ENCODE measurements at regions of chr6 and their contacts with region 1.

Region 1: DNA sequence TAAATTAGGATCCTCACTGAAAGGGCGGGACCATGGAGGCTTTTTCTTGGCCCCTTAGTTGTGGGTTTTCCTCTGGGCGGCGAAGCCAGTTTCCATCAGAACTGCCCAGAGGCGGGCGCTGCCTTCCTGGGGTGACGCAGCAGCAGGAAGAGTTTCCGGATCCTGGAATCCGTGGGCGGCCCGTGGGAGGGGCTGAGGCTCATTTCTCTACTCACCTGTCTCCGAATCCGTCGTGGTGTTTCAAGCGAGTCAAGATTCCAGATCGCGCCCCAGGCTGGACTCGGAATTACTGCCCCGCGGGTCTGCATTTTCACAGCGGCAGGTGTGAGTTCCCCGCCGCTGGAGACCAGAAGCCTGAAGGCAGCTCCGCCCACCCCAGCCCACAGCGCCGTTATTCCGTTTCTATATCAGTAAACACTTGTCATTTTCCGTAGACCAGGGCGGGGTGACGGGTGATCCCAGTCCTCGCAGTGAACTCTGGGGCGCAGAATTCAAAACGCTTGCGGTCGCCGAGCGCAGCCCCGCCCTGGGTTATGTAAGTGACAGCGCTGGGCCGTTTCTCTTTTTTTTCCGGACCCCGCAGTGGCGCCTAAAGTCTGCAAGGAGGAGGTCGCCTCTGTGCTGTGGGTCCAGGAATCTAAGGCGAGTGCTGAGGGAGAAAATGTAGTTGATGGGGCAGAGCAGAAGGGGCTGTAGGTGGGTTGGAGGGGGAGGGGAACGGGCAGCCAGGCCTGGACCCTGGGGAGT is 27.2 kb upstream of the POU5F1 start:
- DNase-seq: peak in 1 of 2 experiments; percentile 73
- H3K4me3 ChIP-seq: peak overlapping the region; percentile 43 to 74 (median 70)
- H3K27ac ChIP-seq: no peak overlapping the region
- H3K4me1 ChIP-seq: peaks cover 0 to 6% (median 5%) of the 10 kb centered on the region in 4 experiments; a peak in 6 of 7 replicates
- H3K27me3 ChIP-seq: no peaks in the 10 kb centered on the region
- CTCF ChIP-seq: peak in 1 of 3 experiments; percentile 3; a peak in 1 of 4 replicates
- EP300 ChIP-seq: no peak
- POLR2A ChIP-seq: no peak
- RAD21 ChIP-seq: peak; percentile 1 to 11; a peak in 1 of 4 replicates

Region 2: DNA sequence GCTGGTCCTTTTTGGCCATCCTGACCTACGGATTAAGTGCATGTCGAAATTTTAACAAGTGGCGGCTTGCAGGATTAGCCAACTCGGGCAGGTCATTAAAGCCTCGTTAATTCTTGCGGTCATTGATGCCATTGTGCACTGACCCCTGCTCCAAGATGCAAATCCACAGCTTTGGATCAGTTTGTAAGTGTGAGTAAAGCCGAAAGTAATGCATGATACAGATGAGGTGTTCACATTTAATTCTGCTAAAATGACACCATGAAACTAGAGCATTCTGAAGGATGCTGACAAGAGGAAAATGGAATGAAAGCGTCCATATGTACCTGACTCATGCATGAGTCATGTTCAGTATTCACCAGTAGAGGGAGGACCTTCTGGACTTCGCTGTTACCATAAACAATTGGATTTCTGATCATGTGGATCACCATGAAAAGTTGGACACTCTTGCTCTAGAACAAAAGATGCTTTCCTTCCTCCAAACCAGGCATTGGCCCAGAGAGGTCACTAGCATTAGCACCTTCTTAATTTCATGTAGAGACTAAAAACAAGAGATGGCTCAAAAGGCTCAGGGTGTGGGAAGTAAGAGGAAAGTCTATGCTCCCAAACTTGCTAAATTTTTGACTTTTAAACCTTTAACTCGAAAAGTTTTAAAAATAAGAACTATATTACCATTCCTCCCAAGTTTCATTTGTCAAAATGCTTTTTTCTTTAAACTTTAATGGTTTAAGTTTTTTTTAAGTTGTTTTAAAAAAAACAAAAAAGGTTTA is 139.4 kb before region 1 on chr6:
- CTCF ChIA-PET with region 1: no interaction called
- POLR2A ChIA-PET with region 1: no interaction called
- DNase-seq: no peak
- H3K4me3 ChIP-seq: no peak overlapping the region
- H3K27ac ChIP-seq: no peak overlapping the region
- H3K4me1 ChIP-seq: no peaks in the 10 kb centered on the region; a peak in 1 of 7 replicates
- H3K27me3 ChIP-seq: no peaks in the 10 kb centered on the region
- CTCF ChIP-seq: peak in 2 of 3 experiments; percentile 14 to 57; a peak in 2 of 4 replicates
- EP300 ChIP-seq: no peak
- POLR2A ChIP-seq: no peak
- RAD21 ChIP-seq: peak in 1 of 2 experiments; percentile 11; a peak in 1 of 4 replicates

Region 3: GRCh38 chr6:31128093-31128676 is 69.5 kb before region 1 on chr6:
- CTCF ChIA-PET with region 1: interaction called, 94 read pairs
- POLR2A ChIA-PET with region 1: interaction called, 2,251 read pairs
- DNase-seq: peak in 1 of 2 experiments; percentile 95
- H3K4me3 ChIP-seq: no peak overlapping the region
- H3K27ac ChIP-seq: no peak overlapping the region
- H3K4me1 ChIP-seq: peaks cover 0 to 3% (median 3%) of the 10 kb centered on the region in 4 experiments; a peak in 3 of 7 replicates
- H3K27me3 ChIP-seq: no peaks in the 10 kb centered on the region; a peak in 1 of 7 replicates
- CTCF ChIP-seq: peak; percentile 60 to 86 (median 83)
- EP300 ChIP-seq: no peak
- POLR2A ChIP-seq: no peak
- RAD21 ChIP-seq: peak; percentile 53 to 70

Region 4: DNA sequence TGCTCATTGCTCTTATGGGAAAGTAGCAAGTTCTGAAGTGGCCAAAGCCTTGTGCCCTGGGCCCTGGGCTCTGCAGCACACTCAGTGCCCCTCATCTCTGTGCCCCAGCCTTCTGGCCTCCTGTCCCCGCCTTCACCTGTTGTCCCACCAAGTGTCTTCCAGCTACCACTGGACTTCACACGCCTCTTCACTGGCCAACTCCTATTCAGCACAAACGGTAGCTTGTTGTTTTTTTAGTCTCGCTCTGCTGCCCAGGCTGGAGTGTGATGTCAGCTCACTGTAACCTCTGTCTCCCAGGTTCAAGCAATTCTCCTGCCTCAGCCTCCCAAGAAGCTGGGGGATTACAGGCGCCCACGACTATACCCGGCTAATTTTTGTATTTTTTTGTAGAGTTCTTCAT is 45.0 kb before region 1 on chr6:
- CTCF ChIA-PET with region 1: interaction called, 45 read pairs
- POLR2A ChIA-PET with region 1: interaction called, 2,251 read pairs
- DNase-seq: no peak
- H3K4me3 ChIP-seq: no peak overlapping the region
- H3K27ac ChIP-seq: no peak overlapping the region
- H3K4me1 ChIP-seq: peaks cover 0 to 13% (median 5%) of the 10 kb centered on the region in 4 experiments; a peak in 3 of 7 replicates
- H3K27me3 ChIP-seq: no peaks in the 10 kb centered on the region
- CTCF ChIP-seq: no peak
- EP300 ChIP-seq: no peak
- POLR2A ChIP-seq: no peak
- RAD21 ChIP-seq: no peak

Region 5: DNA sequence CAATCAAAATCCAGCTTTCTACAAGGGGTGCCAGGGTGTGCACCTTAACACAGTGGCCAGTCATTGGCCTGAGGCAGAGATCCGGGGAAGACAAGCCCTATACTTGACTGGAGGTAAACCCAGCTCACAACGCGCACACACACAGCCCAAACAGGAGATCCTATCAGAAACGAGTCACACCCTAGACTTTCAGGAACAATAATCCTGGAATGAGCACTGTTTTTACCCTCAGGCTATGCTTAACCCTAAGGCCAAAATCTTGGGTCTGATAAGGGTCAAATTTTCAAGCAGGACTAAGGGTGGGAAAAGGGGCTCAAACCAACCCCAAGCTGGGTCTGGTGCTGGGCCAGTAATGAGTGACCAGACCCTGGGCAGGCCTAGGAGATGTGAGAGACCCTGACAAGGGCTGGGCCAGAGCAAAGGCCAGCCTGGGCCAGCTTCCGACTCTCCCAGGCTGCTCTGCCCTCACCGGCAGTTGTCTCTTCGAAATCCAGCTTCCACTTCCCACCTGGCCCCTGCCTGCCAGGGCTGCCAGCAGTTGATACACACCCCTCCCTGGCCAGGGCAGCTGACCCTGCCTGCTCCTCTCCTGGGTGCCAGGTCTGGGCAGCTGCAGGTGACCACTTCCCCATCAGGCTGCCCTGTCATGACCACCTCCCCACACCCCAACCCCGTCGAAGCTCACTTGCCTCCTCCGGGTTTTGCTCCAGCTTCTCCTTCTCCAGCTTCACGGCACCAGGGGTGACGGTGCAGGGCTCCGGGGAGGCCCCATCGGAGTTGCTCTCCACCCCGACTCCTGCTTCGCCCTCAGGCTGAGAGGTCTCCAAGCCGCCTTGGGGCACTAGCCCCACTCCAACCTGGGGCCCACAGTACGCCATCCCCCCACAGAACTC is 28.0 kb before region 1 on chr6:
- CTCF ChIA-PET with region 1: interaction called, 56 read pairs
- POLR2A ChIA-PET with region 1: interaction called, 2,251 read pairs
- DNase-seq: peak in 1 of 2 experiments; percentile 63
- H3K4me3 ChIP-seq: peak overlapping the region; percentile 70 to 92 (median 80)
- H3K27ac ChIP-seq: peak overlapping the region; percentile 77
- H3K4me1 ChIP-seq: peaks cover 22 to 38% (median 28%) of the 10 kb centered on the region in 4 experiments
- H3K27me3 ChIP-seq: no peaks in the 10 kb centered on the region
- CTCF ChIP-seq: no peak
- EP300 ChIP-seq: no peak
- POLR2A ChIP-seq: peak in 1 of 2 experiments; percentile 14; a peak in 2 of 3 replicates
- RAD21 ChIP-seq: no peak

Region 6: DNA sequence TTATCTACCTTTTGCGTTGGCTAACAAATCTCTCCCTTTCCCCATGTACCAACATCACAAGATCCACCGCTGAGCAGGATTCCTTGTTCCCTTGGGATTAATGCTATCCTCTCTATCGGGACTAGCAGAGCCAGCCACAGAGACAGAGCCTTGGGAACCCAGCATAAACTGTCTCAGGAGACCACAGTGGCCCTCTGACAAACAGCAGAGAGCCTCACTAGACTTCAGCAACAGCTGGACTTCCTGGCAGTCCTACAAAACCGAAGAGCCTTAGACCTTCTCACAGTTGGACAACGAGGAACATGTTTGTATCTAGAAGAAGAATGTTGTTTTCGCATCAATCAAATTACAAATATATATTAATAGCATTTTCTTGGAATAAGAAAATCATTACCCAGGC is 12.4 kb after region 1 on chr6:
- CTCF ChIA-PET with region 1: interaction called, 12 read pairs
- POLR2A ChIA-PET with region 1: interaction called, 3 read pairs
- DNase-seq: no peak
- H3K4me3 ChIP-seq: no peak overlapping the region
- H3K27ac ChIP-seq: no peak overlapping the region
- H3K4me1 ChIP-seq: peaks cover 0 to 4% (median 4%) of the 10 kb centered on the region in 4 experiments; a peak in 3 of 7 replicates
- H3K27me3 ChIP-seq: no peaks in the 10 kb centered on the region
- CTCF ChIP-seq: no peak
- EP300 ChIP-seq: no peak
- POLR2A ChIP-seq: no peak
- RAD21 ChIP-seq: no peak

Region 7: DNA sequence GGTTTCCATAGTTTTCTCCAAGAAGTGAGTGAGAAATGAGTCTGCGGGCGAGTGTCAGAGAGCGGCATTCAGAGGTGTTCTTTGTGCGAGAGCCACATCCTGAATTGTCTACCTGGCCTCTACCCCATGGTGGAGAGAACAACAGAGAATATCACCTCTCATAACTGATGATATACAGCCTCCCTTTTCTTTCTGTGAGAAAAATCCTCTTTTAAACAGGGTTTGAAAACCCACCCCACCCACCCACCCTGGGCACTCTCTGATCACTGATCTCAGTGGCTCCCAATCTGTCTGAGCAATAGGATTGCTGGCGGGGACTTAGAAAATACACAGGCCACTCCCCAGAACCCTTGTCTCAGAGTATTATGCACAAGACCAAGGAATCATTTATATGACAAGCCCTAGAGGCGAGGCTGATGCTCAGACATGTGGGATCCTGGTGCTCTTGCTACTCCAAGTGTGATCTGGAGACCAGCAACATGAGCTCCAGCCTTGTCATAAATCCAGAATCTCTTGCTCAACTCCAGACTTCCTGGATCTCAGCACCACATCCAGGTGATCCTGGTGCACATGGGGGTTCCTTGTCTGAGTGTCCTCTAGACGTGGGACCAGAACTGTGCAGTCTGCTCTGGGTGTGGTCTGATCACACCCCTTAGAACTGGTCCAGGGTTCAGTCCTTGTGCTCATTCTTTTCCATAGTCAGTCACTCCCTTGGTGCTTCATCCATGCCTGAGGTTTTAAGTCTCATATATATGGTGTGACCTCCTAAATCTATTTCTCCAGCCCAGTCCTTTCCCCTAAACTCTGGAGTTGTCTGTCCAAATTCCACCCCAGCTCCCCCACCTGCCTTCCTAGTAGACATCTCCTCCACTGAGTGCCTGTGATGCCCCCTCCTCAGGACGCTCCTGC is 153.9 kb after region 1 on chr6:
- CTCF ChIA-PET with region 1: no interaction called
- POLR2A ChIA-PET with region 1: no interaction called
- DNase-seq: no peak
- H3K4me3 ChIP-seq: no peak overlapping the region
- H3K27ac ChIP-seq: no peak overlapping the region
- H3K4me1 ChIP-seq: 0 out of 7 replicates have a peak, but pooled peaks cover 0 to 2% (median 0%) of the 10 kb centered on the region in 4 experiments
- H3K27me3 ChIP-seq: peaks cover 3 to 10% (median 7%) of the 10 kb centered on the region in 4 experiments
- CTCF ChIP-seq: no peak
- EP300 ChIP-seq: no peak
- POLR2A ChIP-seq: no peak
- RAD21 ChIP-seq: no peak

Region 8: GRCh38 chr6:31379850-31380249 is 182.1 kb after region 1 on chr6:
- CTCF ChIA-PET with region 1: interaction called, 17 read pairs
- POLR2A ChIA-PET with region 1: no interaction called
- DNase-seq: no peak
- H3K4me3 ChIP-seq: no peak overlapping the region
- H3K27ac ChIP-seq: no peak overlapping the region
- H3K4me1 ChIP-seq: no peaks in the 10 kb centered on the region
- H3K27me3 ChIP-seq: peaks cover 0 to 3% (median 0%) of the 10 kb centered on the region in 4 experiments; a peak in 1 of 7 replicates
- CTCF ChIP-seq: no peak
- EP300 ChIP-seq: no peak
- POLR2A ChIP-seq: no peak
- RAD21 ChIP-seq: no peak